ENCODE measurements at regions of chr11 and their contacts with region 1.

Region 1: DNA sequence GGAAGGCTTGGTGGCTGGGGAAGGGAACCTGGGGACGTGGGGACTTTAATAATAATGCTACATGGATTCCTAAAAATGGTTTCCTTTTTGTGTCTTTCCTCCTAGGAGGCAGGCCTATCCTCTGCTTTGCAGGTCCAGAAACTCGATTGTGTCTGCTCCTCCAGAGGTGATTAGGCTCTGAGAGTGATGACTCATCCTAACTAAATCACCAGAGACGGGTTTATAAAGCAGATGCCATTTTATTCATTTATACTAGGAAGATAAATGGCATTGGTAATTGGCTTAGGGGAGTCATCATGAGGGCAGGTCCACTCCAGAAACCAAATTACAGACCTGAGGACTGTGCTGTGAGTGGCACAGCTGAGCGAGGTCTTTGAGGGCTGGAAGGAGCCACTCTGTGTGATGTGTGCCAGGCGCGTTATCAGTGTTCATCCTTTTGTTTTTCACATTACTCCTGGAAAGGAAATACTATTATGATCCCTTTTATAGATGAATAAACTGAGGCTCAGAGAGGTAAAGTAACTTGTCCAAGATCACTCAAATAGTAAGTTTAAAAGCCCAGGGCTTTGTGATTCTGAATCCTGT is 7.1 kb downstream of the NLRX1 start:
- DNase-seq: no peak
- CTCF ChIP-seq: no peak

Region 2: GRCh38 chr11:118705111-118705741 is 470.4 kb before region 1 on chr11:
- CTCF ChIA-PET with region 1: no interaction called
- POLR2A ChIA-PET with region 1: no interaction called
- DNase-seq: no peak
- CTCF ChIP-seq: no peak

Region 3: GRCh38 chr11:119196833-119197483 is 21.4 kb after region 1 on chr11:
- CTCF ChIA-PET with region 1: interaction called, 18 read pairs
- POLR2A ChIA-PET with region 1: no interaction called
- DNase-seq: peak; percentile 84
- CTCF ChIP-seq: peak; percentile 70

Measured in GM10248 (cell line).